Dendritic cell treated with granulocyte-macrophage colony-stimulating factor and Interleukin-4, amounts not matched to agents 40 ng/mL and 50 ng/mL, for 4 days (primary cell): ENCODE measurements at regions of chr17 and their contacts with region 1.

Region 1: GRCh38 chr17:68870161-68870826 is 84.9 kb downstream of the ABCA8 start:
- H3K4me3 Mint-ChIP-seq: no peak overlapping the region
- H3K27ac Mint-ChIP-seq: no peak overlapping the region
- H3K4me1 Mint-ChIP-seq: peaks cover 14% of the 10 kb centered on the region
- H3K27me3 Mint-ChIP-seq: peaks cover 2% of the 10 kb centered on the region

Region 2: GRCh38 chr17:68763551-68763950 is 106.7 kb before region 1 on chr17:
- intact Hi-C with region 1: no loop called
- H3K4me3 Mint-ChIP-seq: no peak overlapping the region
- H3K27ac Mint-ChIP-seq: no peak overlapping the region
- H3K4me1 Mint-ChIP-seq: peaks cover 15% of the 10 kb centered on the region
- H3K27me3 Mint-ChIP-seq: peaks cover 3% of the 10 kb centered on the region

Region 3: DNA sequence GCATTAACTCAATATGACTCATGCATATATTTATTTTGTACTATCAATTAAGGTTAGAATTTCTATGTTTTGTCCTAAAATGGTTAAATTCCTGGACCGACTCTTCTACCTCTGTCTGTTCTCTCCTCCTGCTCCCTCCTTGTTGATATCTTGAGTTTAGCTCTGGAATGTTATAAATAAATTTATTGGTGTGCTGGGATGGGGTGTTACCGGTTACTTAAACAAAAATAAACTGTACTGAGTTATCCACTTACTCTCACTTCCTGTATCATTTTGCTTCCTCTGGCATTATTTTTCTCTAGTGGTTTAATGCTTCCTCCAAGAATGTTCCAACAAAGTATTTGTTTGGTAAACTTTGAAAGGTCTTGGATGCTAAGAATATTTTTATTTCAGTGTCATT is 35.2 kb before region 1 on chr17:
- intact Hi-C with region 1: loop called (anchors 5 kb)
- H3K4me3 Mint-ChIP-seq: no peak overlapping the region
- H3K27ac Mint-ChIP-seq: peak overlapping the region; percentile 93
- H3K4me1 Mint-ChIP-seq: peaks cover 68% of the 10 kb centered on the region
- H3K27me3 Mint-ChIP-seq: no peaks in the 10 kb centered on the region